Activated CD4-positive, alpha-beta T cell treated with anti-CD3 and anti-CD28 coated beads, Interleukin-2, amount 10 ng/mL, durations not matched to agents 24 days and 14 days (primary cell): ENCODE measurements at regions of chr3 and their contacts with region 1.

Region 1: DNA sequence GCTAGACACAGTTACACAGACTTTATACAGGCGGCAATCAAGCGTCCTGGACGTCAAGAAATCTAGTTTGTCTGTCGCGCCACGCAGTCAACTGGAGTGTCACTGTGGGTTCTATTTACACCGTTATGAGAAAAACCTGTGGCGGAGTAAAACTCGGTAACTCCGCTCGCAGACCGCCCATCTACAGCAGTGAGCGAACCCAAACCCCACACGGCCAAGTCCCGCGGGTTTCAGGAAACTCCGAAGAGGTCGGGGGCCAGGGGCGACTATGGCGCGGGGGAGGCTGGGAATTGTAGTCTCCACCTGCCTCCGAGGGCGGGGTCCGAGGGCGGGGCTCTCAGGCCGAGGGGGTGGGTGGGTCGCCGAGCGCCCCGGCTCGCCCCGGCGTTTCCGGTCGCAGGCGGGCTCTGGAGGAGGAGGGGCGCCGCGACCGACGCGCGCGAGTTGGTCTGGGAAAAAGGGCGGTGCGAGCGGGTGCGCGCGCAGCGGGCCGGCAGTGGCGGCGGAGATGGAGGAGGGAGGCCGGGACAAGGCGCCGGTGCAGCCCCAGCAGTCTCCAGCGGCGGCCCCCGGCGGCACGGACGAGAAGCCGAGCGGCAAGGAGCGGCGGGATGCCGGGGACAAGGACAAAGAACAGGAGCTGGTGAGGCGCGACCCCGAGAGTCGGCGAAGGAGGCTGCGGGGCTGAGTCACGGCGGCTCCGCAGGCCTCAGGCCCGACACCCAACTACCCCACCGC is at the start of gene PSMD2:
- DNase-seq: peak; percentile 98
- H3K4me3 Mint-ChIP-seq: peak within 1 kb of the TSS; percentile 99
- H3K27ac Mint-ChIP-seq: peak within 1 kb of the TSS; percentile 90
- H3K4me1 Mint-ChIP-seq: peaks cover 20% of the 10 kb centered on the region
- H3K27me3 Mint-ChIP-seq: peaks cover 6% of the 10 kb centered on the region
- total RNA-seq, gene PSMD2: 280 and 283 TPM in 2 replicates

Region 2: GRCh38 chr3:183937610-183938230 is 361.2 kb before region 1 on chr3:
- intact Hi-C with region 1: no loop called
- DNase-seq: no peak
- H3K4me3 Mint-ChIP-seq: no peak overlapping the region
- H3K27ac Mint-ChIP-seq: no peak overlapping the region
- H3K4me1 Mint-ChIP-seq: no peaks in the 10 kb centered on the region
- H3K27me3 Mint-ChIP-seq: no peaks in the 10 kb centered on the region

Region 3: GRCh38 chr3:184185461-184186308 is 113.2 kb before region 1 on chr3 and contains the start of gene ABCF3:
- intact Hi-C with region 1: loop called (anchors 1 kb)
- DNase-seq: peak; percentile 100
- H3K4me3 Mint-ChIP-seq: peak within 1 kb of the TSS; percentile 92
- H3K27ac Mint-ChIP-seq: peak within 1 kb of the TSS; percentile 92
- H3K4me1 Mint-ChIP-seq: peaks cover 28% of the 10 kb centered on the region
- H3K27me3 Mint-ChIP-seq: no peaks in the 10 kb centered on the region
- total RNA-seq, gene ABCF3: 66.9 and 67.6 TPM in 2 replicates

Region 4: DNA sequence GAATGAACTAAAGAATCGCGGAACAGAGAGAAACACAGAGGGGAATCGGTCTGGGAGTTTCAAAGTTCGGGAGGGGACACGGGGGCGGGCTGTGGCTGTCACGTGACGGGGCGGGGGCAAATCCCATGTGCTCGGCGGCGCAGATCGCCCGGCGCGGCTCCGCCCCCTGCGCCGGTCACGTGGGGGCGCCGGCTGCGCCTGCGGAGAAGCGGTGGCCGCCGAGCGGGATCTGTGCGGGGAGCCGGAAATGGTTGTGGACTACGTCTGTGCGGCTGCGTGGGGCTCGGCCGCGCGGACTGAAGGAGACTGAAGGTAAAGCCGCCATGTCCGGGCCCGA is 15.4 kb after region 1 on chr3 and contains the start of gene EIF4G1:
- intact Hi-C with region 1: loop called (anchors 1 kb)
- DNase-seq: peak; percentile 98
- H3K4me3 Mint-ChIP-seq: peak within 1 kb of the TSS; percentile 89
- H3K27ac Mint-ChIP-seq: peak within 1 kb of the TSS; percentile 89
- H3K4me1 Mint-ChIP-seq: peaks cover 28% of the 10 kb centered on the region
- H3K27me3 Mint-ChIP-seq: no peaks in the 10 kb centered on the region
- total RNA-seq, gene EIF4G1: 680 and 700 TPM in 2 replicates

Region 5: DNA sequence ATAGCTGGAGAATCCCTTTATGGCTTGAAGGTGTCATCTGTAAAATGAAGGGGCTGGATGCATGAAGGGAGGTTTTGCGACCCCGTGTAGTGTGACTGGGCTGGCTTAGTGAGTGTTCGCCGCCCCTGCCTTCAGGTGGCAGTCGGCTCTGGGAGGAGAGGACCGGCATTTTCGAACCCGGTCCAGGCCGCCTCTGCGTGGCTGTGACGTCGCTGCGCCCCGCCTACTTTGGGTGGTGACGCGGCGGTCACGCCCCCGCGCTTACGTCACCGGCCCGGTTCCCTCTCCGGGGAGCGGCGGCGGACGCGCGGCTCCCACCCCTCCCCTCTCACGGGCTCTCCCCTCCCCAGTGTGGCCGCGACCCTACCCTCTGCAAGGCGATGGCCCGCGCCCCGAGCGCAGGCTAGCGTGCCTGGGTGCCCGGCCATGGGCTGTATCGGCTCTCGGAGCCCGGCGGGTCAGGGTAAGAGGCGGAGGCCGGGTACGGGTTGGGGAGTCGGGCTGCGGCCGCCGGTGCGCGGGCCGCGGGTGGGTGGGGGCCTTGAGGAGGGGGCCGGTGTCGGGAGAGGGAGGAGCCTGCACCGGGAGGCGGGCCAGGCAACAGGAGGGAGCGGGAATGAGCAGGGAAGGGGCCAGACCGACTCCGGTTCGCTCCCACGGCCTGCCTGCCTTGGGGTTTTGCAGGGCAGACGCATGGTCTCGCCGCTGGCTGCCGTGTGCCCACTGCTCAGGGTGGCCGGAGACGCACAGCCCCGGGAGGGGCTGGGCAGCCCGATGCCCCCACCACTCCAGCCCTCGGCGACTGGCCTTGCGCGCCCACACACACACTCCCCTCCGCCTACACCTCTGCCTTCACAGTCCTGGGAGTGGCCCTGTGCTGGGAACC is 37.0 kb after region 1 on chr3:
- intact Hi-C with region 1: loop called (anchors 2 kb)
- DNase-seq: peak; percentile 98
- H3K4me3 Mint-ChIP-seq: peak overlapping the region; percentile 89
- H3K27ac Mint-ChIP-seq: peak overlapping the region; percentile 92
- H3K4me1 Mint-ChIP-seq: peaks cover 58% of the 10 kb centered on the region
- H3K27me3 Mint-ChIP-seq: no peaks in the 10 kb centered on the region

Region 6: GRCh38 chr3:184399410-184399809 is 100.5 kb after region 1 on chr3:
- intact Hi-C with region 1: no loop called
- DNase-seq: no peak
- H3K4me3 Mint-ChIP-seq: no peak overlapping the region
- H3K27ac Mint-ChIP-seq: no peak overlapping the region
- H3K4me1 Mint-ChIP-seq: no peaks in the 10 kb centered on the region
- H3K27me3 Mint-ChIP-seq: peaks cover 22% of the 10 kb centered on the region